A549 (cell line): ENCODE measurements at regions of chr6 and their contacts with region 1.

Region 1: DNA sequence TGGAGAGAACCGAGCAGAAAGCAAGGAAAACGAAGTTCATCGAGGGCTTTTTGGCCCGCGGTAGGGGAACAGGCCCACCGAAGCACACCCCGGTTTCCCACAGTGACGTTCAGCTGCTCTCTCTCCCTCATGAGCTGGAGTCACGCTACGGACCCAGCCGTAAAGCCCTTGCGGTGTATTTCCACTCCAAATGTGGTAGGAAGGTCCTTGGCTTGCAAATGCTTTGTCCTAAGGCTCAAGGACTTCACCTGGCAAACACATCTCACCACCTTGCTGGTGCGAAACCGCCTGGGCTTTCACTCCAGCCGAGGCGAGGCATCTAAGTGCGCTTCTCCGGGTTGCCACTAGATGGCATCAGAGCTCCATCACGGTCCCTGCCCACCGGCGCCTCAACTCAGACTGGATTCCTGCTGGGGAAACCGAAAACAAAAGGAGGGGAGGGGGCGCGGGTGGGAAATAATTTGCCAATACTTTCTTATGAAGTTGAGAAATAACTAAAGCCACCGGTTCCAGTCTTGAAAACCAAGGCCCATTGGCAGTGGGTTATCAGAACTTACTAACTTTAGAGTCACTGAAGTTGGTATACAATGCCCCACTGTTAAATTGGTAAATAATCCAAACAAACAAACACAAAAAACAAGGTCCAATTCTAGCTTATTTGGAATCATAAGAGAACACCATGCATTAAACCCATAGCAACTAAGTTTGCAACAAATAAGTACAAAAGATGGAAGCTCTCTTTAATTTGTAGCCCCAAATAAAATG is 13.4 kb upstream of the FOXC1 start:
- DNase-seq: peak in 1 of 2 experiments; percentile 43
- ATAC-seq: peak; percentile 73 to 92
- H3K4me3 ChIP-seq: no peak overlapping the region
- H3K27ac ChIP-seq: peak overlapping the region in 1 of 2 experiments; percentile 60; a peak in 1 of 6 replicates
- H3K4me1 ChIP-seq: peaks cover 18% of the 10 kb centered on the region
- CTCF ChIP-seq: peak; percentile 81
- EP300 ChIP-seq: no peak
- POLR2A ChIP-seq: no peak
- RAD21 ChIP-seq: peak; percentile 87 to 88

Region 2: GRCh38 chr6:1325461-1326309 is 270.6 kb before region 1 on chr6:
- CTCF ChIA-PET with region 1: no interaction called
- POLR2A ChIA-PET with region 1: no interaction called
- DNase-seq: peak; percentile 77 to 93
- ATAC-seq: peak; percentile 96
- H3K4me3 ChIP-seq: no peak overlapping the region
- H3K27ac ChIP-seq: peak overlapping the region; percentile 80 to 84
- H3K4me1 ChIP-seq: peaks cover 61% of the 10 kb centered on the region
- CTCF ChIP-seq: no peak
- EP300 ChIP-seq: peak; percentile 77 to 90; a peak in 3 of 5 replicates
- POLR2A ChIP-seq: no peak
- RAD21 ChIP-seq: peak; percentile 19 to 30; a peak in 4 of 5 replicates

Region 3: GRCh38 chr6:1580109-1580508 is 16.2 kb before region 1 on chr6:
- CTCF ChIA-PET with region 1: interaction called, 10 read pairs
- POLR2A ChIA-PET with region 1: no interaction called
- DNase-seq: no peak
- ATAC-seq: no peak
- H3K4me3 ChIP-seq: no peak overlapping the region
- H3K27ac ChIP-seq: no peak overlapping the region
- H3K4me1 ChIP-seq: no peaks in the 10 kb centered on the region
- CTCF ChIP-seq: no peak
- EP300 ChIP-seq: no peak
- POLR2A ChIP-seq: no peak
- RAD21 ChIP-seq: no peak

Region 4: DNA sequence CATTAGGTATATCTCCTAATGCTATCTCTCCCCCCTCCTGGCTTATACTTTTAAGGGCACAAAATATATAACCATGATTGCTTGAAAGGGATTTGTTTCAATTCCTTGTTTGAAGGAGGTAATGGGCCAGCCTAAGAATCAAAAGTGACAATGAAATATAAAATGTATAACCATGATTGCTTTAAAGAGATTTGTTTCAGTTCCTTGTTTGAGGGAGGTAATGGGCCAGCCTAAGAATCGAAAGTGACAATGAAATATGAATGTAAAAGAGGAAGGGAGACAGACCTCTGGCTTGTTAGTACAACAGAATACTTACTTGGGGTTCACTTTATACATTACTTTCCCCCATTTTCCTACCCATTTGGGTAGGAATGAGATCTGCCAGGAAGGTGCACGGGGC is 68.9 kb after region 1 on chr6:
- CTCF ChIA-PET with region 1: no interaction called
- POLR2A ChIA-PET with region 1: no interaction called
- DNase-seq: no peak
- ATAC-seq: no peak
- H3K4me3 ChIP-seq: no peak overlapping the region
- H3K27ac ChIP-seq: no peak overlapping the region
- H3K4me1 ChIP-seq: no peaks in the 10 kb centered on the region
- CTCF ChIP-seq: no peak
- EP300 ChIP-seq: no peak
- POLR2A ChIP-seq: no peak
- RAD21 ChIP-seq: no peak

Region 5: DNA sequence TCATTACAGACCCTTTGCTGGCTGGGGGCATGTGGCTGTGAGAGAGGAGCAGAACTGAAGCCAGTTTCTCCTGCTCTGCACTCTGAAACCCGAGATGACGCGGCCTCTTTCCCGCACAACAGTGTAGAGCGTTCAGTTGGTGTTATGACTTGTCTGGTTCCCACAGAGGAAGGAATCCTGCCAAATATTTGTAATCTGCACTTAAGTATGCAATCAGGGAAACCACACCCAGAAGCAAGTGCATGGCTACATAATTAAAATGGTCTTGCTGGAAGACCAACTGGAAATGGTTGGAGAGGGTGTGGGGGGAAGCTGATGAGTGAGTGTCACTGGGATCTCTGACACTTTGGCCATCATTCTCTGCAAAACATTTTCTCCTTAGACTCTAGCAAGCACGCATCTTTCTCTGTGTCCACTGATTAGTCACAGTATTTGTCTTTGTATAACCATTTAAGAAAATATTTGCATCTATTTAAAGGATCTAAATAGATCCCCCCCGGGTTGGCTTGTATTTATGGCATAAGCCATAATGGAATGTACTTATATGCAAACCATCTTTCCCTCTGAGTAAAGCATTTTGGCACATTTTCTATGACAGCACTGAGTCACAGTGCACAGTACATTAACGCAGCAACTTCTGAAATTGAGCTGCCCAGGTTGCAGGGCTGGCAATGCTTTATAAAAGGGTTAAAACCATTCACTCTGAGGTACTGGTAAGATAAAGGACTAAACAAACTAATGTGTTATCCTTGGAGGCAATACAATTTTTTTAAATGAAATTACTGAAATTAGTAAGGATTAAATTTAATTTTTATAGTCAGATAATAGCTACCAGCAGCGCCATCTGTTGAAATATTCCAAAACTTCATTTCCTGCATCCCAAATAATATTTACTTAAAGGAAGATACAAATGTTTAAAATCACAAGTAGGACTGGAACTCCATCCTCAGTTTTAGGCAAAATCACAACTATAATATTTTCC is 90.1 kb after region 1 on chr6:
- CTCF ChIA-PET with region 1: no interaction called
- POLR2A ChIA-PET with region 1: no interaction called
- DNase-seq: no peak
- ATAC-seq: no peak
- H3K4me3 ChIP-seq: no peak overlapping the region
- H3K27ac ChIP-seq: no peak overlapping the region
- H3K4me1 ChIP-seq: no peaks in the 10 kb centered on the region
- CTCF ChIP-seq: peak; percentile 15; the same call in 1 of the 3 replicates
- EP300 ChIP-seq: no peak
- POLR2A ChIP-seq: no peak
- RAD21 ChIP-seq: no peak

Region 6: GRCh38 chr6:1739680-1740079 is 143.4 kb after region 1 on chr6:
- CTCF ChIA-PET with region 1: no interaction called
- POLR2A ChIA-PET with region 1: no interaction called
- DNase-seq: no peak
- ATAC-seq: no peak
- H3K4me3 ChIP-seq: no peak overlapping the region
- H3K27ac ChIP-seq: no peak overlapping the region
- H3K4me1 ChIP-seq: no peaks in the 10 kb centered on the region
- CTCF ChIP-seq: no peak
- EP300 ChIP-seq: no peak
- POLR2A ChIP-seq: no peak
- RAD21 ChIP-seq: no peak

Region 7: GRCh38 chr6:2103644-2104523 is 507.6 kb after region 1 on chr6:
- CTCF ChIA-PET with region 1: interaction called, 18 read pairs
- POLR2A ChIA-PET with region 1: no interaction called
- DNase-seq: peak; percentile 33 to 59
- ATAC-seq: peak; percentile 93 to 97
- H3K4me3 ChIP-seq: 0 out of 3 replicates have a peak overlapping the region, but pooled peaks have one; percentile 13
- H3K27ac ChIP-seq: 0 out of 6 replicates have a peak overlapping the region, but pooled peaks have one; percentile 14 to 29
- H3K4me1 ChIP-seq: peaks cover 25% of the 10 kb centered on the region
- CTCF ChIP-seq: peak; percentile 58
- EP300 ChIP-seq: no peak
- POLR2A ChIP-seq: no peak
- RAD21 ChIP-seq: peak; percentile 78

Region 8: GRCh38 chr6:2695454-2696095 is 1099.3 kb after region 1 on chr6:
- CTCF ChIA-PET with region 1: interaction called, 18 read pairs
- POLR2A ChIA-PET with region 1: no interaction called
- DNase-seq: peak in 1 of 2 experiments; percentile 10
- ATAC-seq: peak; percentile 59 to 61; a peak in 3 of 6 replicates
- H3K4me3 ChIP-seq: no peak overlapping the region
- H3K27ac ChIP-seq: no peak overlapping the region
- H3K4me1 ChIP-seq: no peaks in the 10 kb centered on the region
- CTCF ChIP-seq: peak; percentile 63
- EP300 ChIP-seq: no peak
- POLR2A ChIP-seq: no peak
- RAD21 ChIP-seq: peak; percentile 67 to 71

Region 9: DNA sequence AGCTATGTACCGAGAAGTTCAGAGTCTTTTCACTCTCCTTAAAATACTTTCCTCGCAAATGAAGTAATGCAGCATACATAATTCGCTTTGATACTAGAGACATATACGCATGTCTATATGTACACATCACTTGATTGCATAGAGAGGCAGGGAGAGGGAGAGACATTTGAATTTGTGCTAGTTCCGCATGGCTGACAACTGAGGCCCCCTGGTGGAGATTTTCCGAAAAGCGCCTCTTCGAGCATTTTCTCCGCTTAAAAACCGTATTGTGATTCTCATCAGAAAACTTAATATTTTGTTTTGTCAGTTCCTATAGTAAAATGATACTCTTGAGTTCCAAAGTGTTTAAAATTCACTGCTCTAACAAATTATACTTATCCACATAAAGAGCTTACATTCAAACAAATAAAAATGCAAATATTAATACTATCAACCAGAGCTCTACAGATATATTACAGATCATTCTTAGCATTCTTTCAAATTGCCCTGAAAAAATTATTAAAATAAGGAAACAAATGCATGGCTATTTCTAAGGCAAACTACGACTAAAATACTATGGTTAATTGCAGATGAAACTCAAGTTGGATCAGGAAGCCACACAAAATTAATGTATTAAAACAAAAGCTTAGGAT is 1153.8 kb after region 1 on chr6:
- CTCF ChIA-PET with region 1: interaction called, 32 read pairs
- POLR2A ChIA-PET with region 1: no interaction called
- DNase-seq: peak; percentile 32 to 50
- ATAC-seq: peak; percentile 50 to 66; a peak in 5 of 6 replicates
- H3K4me3 ChIP-seq: no peak overlapping the region
- H3K27ac ChIP-seq: no peak overlapping the region
- H3K4me1 ChIP-seq: no peaks in the 10 kb centered on the region
- CTCF ChIP-seq: peak; percentile 78
- EP300 ChIP-seq: no peak
- POLR2A ChIP-seq: no peak
- RAD21 ChIP-seq: peak; percentile 36 to 38; a peak in 3 of 5 replicates